Ascending aorta (tissue), 2 donors: ENCODE measurements at regions of chr14 and their contacts with region 1.

Region 1: GRCh38 chr14:75132382-75133086 is 5.7 kb upstream of the NEK9 start:
- DNase-seq: no peak
- H3K4me3 ChIP-seq: no peak overlapping the region
- H3K27ac ChIP-seq: peak overlapping the region; percentile 4 to 41
- H3K4me1 ChIP-seq: peaks cover 4 to 8% of the 10 kb centered on the region in 2 donors
- H3K27me3 ChIP-seq: no peaks in the 10 kb centered on the region
- CTCF ChIP-seq: peak; percentile 68 to 73 (median 71)

Region 2: GRCh38 chr14:75487155-75487671 is 354.7 kb after region 1 on chr14:
- intact Hi-C with region 1: loop called (anchors 5 kb)
- DNase-seq: no peak
- H3K4me3 ChIP-seq: no peak overlapping the region
- H3K27ac ChIP-seq: no peak overlapping the region
- H3K4me1 ChIP-seq: no peaks in the 10 kb centered on the region
- H3K27me3 ChIP-seq: no peaks in the 10 kb centered on the region
- CTCF ChIP-seq: no peak